Stomach (tissue), 19 donors: ENCODE measurements at regions of chr6 and their contacts with region 1.

Region 1: GRCh38 chr6:7615611-7616383 is 25.8 kb downstream of the SNRNP48 start:
- DNase-seq: peak; percentile 38 to 85
- H3K4me3 ChIP-seq: peak overlapping the region in 3 of 4 donors; percentile 2 to 30 (median 8)
- H3K27ac ChIP-seq: no peak overlapping the region
- H3K4me1 ChIP-seq: peaks cover 0 to 15% (median 12%) of the 10 kb centered on the region in 4 donors
- H3K27me3 ChIP-seq: no peaks in the 10 kb centered on the region
- CTCF ChIP-seq: peak in 5 of 7 experiments; percentile 58 to 73 (median 63)
- EP300 ChIP-seq: no peak
- POLR2A ChIP-seq: no peak

Region 2: GRCh38 chr6:6676910-6677441 is 938.8 kb before region 1 on chr6:
- intact Hi-C with region 1: loop called (anchors 10 kb)
- DNase-seq: peak; percentile 84 to 92
- H3K4me3 ChIP-seq: no peak overlapping the region
- H3K27ac ChIP-seq: peak overlapping the region in 3 of 5 donors; percentile 17 to 55 (median 41)
- H3K4me1 ChIP-seq: peaks cover 18 to 43% (median 22%) of the 10 kb centered on the region in 4 donors
- H3K27me3 ChIP-seq: no peaks in the 10 kb centered on the region
- CTCF ChIP-seq: peak in 6 of 7 experiments; percentile 50 to 98 (median 98)
- EP300 ChIP-seq: no peak
- POLR2A ChIP-seq: no peak

Region 3: GRCh38 chr6:7270320-7271204 is 345.2 kb before region 1 on chr6:
- intact Hi-C with region 1: loop called (anchors 10 kb)
- DNase-seq: peak in 1 of 2 donors; percentile 62
- H3K4me3 ChIP-seq: no peak overlapping the region
- H3K27ac ChIP-seq: no peak overlapping the region
- H3K4me1 ChIP-seq: peaks cover 0 to 18% (median 12%) of the 10 kb centered on the region in 4 donors
- H3K27me3 ChIP-seq: no peaks in the 10 kb centered on the region
- CTCF ChIP-seq: no peak
- EP300 ChIP-seq: no peak
- POLR2A ChIP-seq: no peak

Region 4: DNA sequence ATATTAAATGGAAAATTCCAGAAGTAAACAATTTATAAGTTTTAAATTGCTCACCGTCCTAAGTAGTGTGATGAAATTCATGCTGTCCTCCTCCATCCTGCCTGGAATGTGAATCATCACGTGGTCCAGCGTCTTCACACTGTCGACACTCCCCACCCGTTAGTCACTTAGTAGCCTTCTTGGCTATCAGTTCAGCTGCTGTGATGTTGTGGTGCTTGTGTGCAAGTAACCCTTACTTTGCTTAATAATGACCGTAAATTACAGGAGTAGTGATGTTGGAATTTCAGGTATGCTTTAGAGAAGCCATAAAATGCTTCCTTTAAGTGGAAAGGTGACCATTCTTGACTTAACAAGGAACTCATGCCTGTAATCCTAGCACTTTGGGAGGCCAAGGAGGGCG is 201.0 kb before region 1 on chr6:
- intact Hi-C with region 1: no loop called
- DNase-seq: no peak
- H3K4me3 ChIP-seq: no peak overlapping the region
- H3K27ac ChIP-seq: no peak overlapping the region
- H3K4me1 ChIP-seq: peaks cover 13 to 24% (median 17%) of the 10 kb centered on the region in 4 donors
- H3K27me3 ChIP-seq: no peaks in the 10 kb centered on the region
- CTCF ChIP-seq: no peak
- EP300 ChIP-seq: no peak
- POLR2A ChIP-seq: no peak